Breast epithelium (tissue), 4 donors: ENCODE measurements at regions of chr14 and their contacts with region 1.

Region 1: DNA sequence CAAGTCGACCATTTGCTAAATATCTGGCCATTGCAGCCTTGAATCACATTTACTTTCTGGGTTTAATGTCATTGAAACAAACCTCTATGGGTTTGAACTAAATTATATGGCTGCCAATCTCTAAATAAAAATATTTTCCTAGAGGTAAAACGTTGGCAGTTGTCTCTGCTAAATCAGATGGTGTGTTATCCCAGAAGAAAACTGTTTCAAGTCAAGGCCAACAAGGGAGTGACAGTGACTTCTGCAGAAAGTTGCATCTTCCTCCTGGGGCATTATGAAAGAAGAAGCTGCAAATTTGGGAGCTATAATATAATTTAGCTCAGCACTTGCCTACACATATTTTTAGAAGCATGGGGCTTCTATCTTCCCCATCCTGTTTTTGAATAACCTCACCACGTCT is 116.2 kb downstream of the TTC8 start:
- DNase-seq: no peak
- H3K4me3 ChIP-seq: no peak overlapping the region
- H3K27ac ChIP-seq: no peak overlapping the region
- H3K4me1 ChIP-seq: no peaks in the 10 kb centered on the region
- H3K27me3 ChIP-seq: no peaks in the 10 kb centered on the region
- CTCF ChIP-seq: no peak
- POLR2A ChIP-seq: no peak

Region 2: GRCh38 chr14:88960496-88960895 is 19.8 kb after region 1 on chr14:
- intact Hi-C with region 1: loop called (anchors 1 kb)
- DNase-seq: no peak
- H3K4me3 ChIP-seq: no peak overlapping the region
- H3K27ac ChIP-seq: no peak overlapping the region
- H3K4me1 ChIP-seq: peaks cover 0 to 2% of the 10 kb centered on the region in 2 donors
- H3K27me3 ChIP-seq: no peaks in the 10 kb centered on the region
- CTCF ChIP-seq: no peak
- POLR2A ChIP-seq: no peak

Region 3: GRCh38 chr14:89957791-89958190 is 1017.1 kb after region 1 on chr14:
- intact Hi-C with region 1: no loop called
- DNase-seq: no peak
- H3K4me3 ChIP-seq: no peak overlapping the region
- H3K27ac ChIP-seq: no peak overlapping the region
- H3K4me1 ChIP-seq: peaks cover 0 to 10% of the 10 kb centered on the region in 2 donors
- H3K27me3 ChIP-seq: no peaks in the 10 kb centered on the region
- CTCF ChIP-seq: no peak
- POLR2A ChIP-seq: no peak